ENCODE measurements at regions of chr22 and their contacts with region 1.

Region 1: DNA sequence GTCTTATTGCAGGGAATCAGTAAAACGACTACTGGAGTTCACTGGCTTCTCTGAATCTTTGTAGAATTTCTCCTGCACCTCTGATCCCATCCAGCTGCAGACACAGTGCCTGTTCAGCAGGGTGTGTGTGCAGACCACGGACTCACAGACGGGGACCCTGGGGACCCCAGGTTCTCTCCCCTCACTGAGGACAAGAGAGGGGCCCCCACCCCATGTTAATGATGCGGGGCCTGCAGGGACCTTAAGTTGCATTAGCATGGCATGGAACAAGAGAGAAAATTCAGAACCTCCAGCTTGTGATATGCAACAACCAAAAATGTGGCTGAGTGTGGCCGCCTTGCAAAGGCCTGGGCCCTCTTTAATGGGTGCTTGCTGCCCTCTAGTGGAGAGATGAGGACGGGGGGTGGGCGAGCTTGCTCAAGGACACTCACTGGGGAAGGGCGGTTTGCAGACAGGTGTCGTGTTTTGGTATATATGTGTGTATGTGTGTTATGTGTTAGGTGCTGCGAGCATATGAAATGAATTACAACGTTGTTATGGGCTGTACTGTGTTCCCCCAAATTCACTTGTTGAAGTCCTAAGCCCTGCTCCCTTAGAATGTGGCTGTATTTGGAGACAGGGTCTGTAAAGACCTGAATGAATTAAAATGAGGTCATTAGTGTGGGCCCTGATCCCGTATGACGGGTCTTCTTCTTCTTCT is 84.4 kb upstream of the SEPTIN5 start:
- DNase-seq: peak; percentile 92
- ATAC-seq: peak; percentile 79
- H3K4me3 Mint-ChIP-seq: no peak overlapping the region
- H3K27ac Mint-ChIP-seq: no peak overlapping the region; the same call in 1 of the 2 replicates
- H3K4me1 Mint-ChIP-seq: peaks cover 24% of the 10 kb centered on the region
- H3K27me3 Mint-ChIP-seq: no peaks in the 10 kb centered on the region
- CTCF ChIP-seq: peak; percentile 79

Region 2: DNA sequence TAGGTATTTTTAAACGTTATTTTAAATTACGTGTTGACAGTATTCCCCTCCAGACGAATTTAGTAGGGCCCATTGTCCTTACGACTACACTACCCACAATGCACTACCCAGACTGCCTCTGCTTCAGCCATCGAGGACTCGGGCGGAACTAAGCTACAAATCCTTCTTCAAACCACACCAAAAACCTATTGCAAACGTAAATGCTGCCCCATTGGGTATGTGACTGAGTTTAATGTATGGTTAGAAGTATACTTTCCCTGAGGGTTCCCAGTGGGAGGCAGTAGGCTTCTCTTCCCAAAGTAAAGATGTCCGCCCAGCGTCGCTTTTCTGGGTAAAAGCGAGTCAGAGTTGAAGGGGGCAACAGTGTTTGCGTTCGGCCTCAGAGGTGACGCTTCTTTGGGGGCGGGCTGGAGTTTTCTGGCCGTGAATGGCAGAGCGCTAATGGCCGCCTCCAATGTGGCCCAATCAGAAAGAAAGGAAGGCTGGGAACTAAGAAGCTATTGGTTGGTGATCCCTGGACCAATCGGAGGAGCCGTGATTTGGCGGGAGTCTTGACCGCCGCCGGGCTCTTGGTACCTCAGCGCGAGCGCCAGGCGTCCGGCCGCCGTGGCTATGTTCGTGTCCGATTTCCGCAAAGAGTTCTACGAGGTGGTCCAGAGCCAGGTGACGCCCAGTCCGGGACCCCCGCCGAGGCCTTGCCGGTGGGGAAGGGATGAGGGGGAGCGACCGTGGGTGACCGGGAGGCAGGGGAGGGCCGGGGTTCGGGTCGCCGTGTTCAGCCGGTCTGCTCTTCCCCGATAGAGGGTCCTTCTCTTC is 150.3 kb before region 1 on chr22 and contains the start of gene CDC45:
- CTCF ChIA-PET with region 1: interaction called, 20 read pairs
- POLR2A ChIA-PET with region 1: interaction called, 4 read pairs
- DNase-seq: peak; percentile 95
- ATAC-seq: peak; percentile 96
- H3K4me3 Mint-ChIP-seq: peak within 1 kb of the TSS; percentile 96
- H3K27ac Mint-ChIP-seq: peak within 1 kb of the TSS; percentile 99
- H3K4me1 Mint-ChIP-seq: peaks cover 23% of the 10 kb centered on the region
- H3K27me3 Mint-ChIP-seq: no peaks in the 10 kb centered on the region
- CTCF ChIP-seq: no peak
- total RNA-seq, gene CDC45: 34.4 to 38.1 TPM (median 35.0 TPM) in 3 replicates

Region 3: DNA sequence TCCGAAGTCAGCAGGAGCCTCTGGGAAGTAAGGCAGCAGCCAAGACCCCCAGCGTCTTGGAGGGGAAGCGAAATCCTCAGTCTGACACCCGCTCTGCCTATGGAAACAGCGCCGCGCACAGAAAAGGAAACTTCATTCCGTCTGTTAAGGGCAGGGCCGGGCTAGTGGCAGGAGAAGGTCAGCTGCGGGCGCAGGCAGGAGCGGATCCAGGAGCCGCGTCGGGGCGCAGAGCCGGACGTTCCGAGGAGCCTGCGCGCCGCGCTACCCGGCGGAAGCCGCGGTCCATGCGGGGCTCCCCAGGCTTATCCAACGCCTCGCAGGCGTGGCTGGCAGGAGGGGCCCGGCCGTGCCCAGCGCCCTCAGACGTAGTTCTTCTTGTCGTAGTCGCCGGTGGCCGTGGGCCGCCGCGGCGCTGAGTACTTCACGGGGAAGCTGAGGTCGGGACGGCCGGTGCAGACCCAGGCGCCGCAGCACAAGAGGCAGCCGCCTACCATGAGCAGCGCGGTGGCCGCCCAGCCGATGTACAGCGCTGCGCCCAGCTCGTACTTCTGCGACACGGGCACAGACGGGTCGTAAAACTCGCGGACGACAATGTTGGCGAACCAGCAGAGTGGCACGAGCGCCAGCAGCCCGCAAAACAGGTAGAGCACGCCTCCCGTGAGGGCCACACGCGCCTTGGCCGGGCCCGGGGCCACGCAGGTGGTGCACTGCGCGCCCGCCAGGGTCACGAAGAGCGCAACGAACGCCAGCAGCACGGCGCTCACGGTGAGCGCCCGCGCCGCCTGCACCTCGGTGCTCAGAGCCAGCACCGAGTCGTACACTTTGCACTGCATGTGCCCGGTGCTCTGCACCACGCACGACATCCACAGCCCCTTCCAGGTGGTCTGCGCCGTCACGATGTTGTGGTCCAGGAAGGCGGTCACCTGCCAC is 106.4 kb before region 1 on chr22:
- CTCF ChIA-PET with region 1: interaction called, 49 read pairs
- POLR2A ChIA-PET with region 1: no interaction called
- DNase-seq: peak; percentile 70
- ATAC-seq: peak; percentile 55
- H3K4me3 Mint-ChIP-seq: peak overlapping the region; percentile 76
- H3K27ac Mint-ChIP-seq: no peak overlapping the region
- H3K4me1 Mint-ChIP-seq: peaks cover 11% of the 10 kb centered on the region
- H3K27me3 Mint-ChIP-seq: peaks cover 52% of the 10 kb centered on the region
- CTCF ChIP-seq: no peak

Region 4: DNA sequence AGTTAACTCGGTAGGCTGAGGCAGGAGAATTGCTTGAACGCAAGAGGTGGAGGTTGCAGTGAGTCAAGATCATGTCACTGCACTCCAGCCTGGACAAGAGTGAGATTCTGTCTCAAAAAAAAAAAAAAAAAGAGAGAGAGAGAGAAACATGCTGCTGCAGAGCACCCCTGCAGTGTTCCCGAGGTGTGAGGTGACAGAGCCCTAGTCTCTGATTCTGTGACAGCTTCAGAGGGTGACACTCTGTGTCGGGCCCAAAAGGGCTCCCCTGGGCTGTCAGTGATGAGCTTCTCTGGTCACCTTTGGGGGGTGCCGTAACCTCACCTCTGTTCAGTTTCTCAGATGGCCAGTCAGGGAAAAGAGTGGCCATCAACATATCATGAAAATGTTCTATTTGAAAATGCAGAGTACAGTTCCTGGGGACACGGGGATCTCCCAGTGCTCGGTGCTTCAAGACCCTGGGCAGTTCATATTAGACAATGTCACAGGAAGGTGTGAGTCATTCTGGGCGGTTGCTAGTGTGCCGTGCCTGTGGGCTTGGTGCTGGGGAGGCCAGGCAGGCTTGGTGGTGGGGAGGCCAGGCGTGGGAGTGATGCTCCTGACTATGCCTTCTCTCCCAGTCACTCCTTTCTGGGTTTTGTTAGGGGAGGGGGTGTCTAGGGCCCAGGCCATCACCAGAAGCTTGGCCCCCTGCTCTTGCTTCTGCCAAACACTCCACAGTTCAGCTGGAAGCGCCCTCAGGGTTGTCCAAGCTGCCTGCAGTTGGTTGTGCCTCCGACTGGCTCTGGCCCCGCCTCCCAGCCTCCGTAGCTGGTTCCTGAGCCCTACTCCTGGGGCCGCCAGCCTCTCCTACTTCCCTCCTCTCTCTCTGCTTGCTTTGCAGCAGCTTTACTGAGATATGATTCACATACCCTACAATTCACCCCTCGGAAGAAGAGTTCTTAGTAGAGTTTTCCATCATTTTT is 53.1 kb before region 1 on chr22:
- CTCF ChIA-PET with region 1: interaction called, 40 read pairs
- POLR2A ChIA-PET with region 1: no interaction called
- DNase-seq: no peak
- ATAC-seq: peak; percentile 82
- H3K4me3 Mint-ChIP-seq: no peak overlapping the region
- H3K27ac Mint-ChIP-seq: no peak overlapping the region
- H3K4me1 Mint-ChIP-seq: peaks cover 10% of the 10 kb centered on the region
- H3K27me3 Mint-ChIP-seq: no peaks in the 10 kb centered on the region; the same call in 1 of the 2 replicates
- CTCF ChIP-seq: no peak

Region 5: DNA sequence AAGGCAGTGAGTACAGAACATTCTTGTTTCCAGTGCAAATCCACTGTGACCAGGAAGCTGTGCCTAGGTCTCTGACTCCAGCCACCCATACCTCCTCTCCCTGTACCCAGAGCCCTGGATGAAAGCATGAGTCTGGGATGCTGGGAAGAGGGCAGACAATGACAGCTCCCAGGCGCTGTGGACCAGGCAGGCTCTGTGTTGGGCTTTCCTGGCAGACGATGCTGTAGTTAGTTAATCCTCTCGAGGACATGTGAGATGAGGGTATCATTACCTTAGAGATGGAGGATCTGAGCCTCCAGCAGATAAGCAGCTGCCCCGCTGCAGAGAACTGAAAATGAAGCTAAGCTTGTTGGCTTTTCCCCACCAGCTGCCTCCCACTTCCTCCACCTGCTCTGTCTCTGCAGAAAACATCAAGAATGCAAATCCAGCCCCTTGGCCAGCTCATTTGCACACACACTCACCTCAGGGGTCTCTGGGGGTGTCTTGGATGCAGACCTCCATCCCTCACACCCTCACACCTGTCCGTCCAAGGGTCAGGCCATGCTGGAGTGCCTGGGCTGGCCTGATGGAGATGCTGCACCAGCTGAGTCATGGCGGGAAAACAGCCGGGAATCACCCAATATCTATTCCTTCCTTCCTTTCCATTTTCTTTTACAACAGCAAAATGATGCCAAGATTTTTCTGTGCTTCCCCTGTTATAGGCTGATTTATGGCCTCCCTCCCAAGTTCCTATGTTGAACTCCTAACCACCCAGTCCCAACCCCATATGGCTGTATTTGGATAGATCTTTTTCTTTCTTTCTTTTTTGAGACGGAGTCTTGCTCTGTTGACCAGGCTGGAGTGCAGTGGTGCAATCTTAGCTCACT is 10.5 kb before region 1 on chr22:
- CTCF ChIA-PET with region 1: interaction called, 23 read pairs
- POLR2A ChIA-PET with region 1: no interaction called
- DNase-seq: no peak
- ATAC-seq: no peak
- H3K4me3 Mint-ChIP-seq: no peak overlapping the region
- H3K27ac Mint-ChIP-seq: no peak overlapping the region; the same call in 1 of the 2 replicates
- H3K4me1 Mint-ChIP-seq: peaks cover 71% of the 10 kb centered on the region
- H3K27me3 Mint-ChIP-seq: no peaks in the 10 kb centered on the region; the same call in 1 of the 2 replicates
- CTCF ChIP-seq: no peak

Region 6: GRCh38 chr22:19691721-19692341 is 62.0 kb after region 1 on chr22:
- CTCF ChIA-PET with region 1: interaction called, 10 read pairs
- POLR2A ChIA-PET with region 1: no interaction called
- DNase-seq: no peak
- ATAC-seq: peak; percentile 10
- H3K4me3 Mint-ChIP-seq: no peak overlapping the region
- H3K27ac Mint-ChIP-seq: no peak overlapping the region
- H3K4me1 Mint-ChIP-seq: peaks cover 27% of the 10 kb centered on the region
- H3K27me3 Mint-ChIP-seq: peaks cover 4% of the 10 kb centered on the region; the same call in 1 of the 2 replicates
- CTCF ChIP-seq: no peak

Region 7: DNA sequence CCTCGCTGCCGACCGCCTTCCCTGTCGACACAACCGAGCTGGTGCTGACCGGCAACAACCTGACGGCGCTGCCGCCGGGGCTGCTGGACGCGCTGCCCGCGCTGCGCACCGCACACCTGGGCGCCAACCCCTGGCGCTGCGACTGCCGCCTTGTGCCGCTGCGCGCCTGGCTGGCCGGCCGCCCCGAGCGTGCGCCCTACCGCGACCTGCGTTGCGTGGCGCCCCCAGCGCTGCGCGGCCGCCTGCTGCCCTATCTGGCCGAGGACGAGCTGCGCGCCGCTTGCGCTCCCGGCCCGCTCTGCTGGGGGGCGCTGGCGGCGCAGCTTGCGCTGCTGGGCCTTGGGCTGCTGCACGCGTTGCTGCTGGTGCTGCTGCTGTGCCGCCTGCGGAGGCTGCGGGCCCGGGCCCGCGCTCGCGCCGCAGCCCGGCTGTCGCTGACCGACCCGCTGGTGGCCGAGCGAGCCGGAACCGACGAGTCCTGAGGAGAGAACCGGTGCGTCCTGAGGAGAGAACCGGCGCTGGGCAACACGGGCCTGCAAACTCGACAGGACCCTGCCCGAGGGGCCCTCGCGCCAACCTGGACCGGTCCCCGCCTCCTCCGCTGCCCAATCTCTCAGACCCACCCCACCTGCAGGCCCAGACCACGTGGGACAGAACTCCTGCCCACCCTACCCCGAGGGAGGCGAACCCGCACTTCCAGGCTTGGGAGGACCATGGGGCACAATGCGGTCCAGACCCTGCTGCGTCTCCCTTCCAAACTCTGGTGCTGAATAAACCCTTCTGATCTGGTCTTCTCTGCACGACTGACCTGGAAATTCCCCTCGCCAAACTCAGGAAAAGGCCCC is 94.3 kb after region 1 on chr22:
- CTCF ChIA-PET with region 1: interaction called, 10 read pairs
- POLR2A ChIA-PET with region 1: no interaction called
- DNase-seq: peak; percentile 76
- ATAC-seq: peak; percentile 68
- H3K4me3 Mint-ChIP-seq: peak overlapping the region; percentile 53
- H3K27ac Mint-ChIP-seq: no peak overlapping the region
- H3K4me1 Mint-ChIP-seq: peaks cover 20% of the 10 kb centered on the region
- H3K27me3 Mint-ChIP-seq: peaks cover 95% of the 10 kb centered on the region
- CTCF ChIP-seq: peak; percentile 27; the same call in 1 of the 2 replicates